Caco-2 (cell line): ENCODE measurements at regions of chr17 and their contacts with region 1.

Region 1: GRCh38 chr17:77300016-77300686 is 159.4 kb downstream of the SEC14L1 start:
- DNase-seq: peak; percentile 81 to 88
- H3K4me3 ChIP-seq: no peak overlapping the region
- H3K4me3 Mint-ChIP-seq: no peak overlapping the region
- H3K27ac Mint-ChIP-seq: peak overlapping the region; percentile 32
- H3K4me1 ChIP-seq: peaks cover 87% of the 10 kb centered on the region
- H3K4me1 Mint-ChIP-seq: peaks cover 44% of the 10 kb centered on the region
- H3K27me3 ChIP-seq: no peaks in the 10 kb centered on the region
- H3K27me3 Mint-ChIP-seq: no peaks in the 10 kb centered on the region
- CTCF ChIP-seq: no peak

Region 2: GRCh38 chr17:77231076-77231871 is 68.9 kb before region 1 on chr17:
- CTCF ChIA-PET with region 1: interaction called, 10 read pairs
- POLR2A ChIA-PET with region 1: no interaction called
- intact Hi-C with region 1: no loop called
- DNase-seq: no peak
- H3K4me3 ChIP-seq: no peak overlapping the region
- H3K4me3 Mint-ChIP-seq: no peak overlapping the region
- H3K27ac Mint-ChIP-seq: no peak overlapping the region
- H3K4me1 ChIP-seq: peaks cover 28% of the 10 kb centered on the region; the same call in 1 of the 2 replicates
- H3K4me1 Mint-ChIP-seq: peaks cover 29% of the 10 kb centered on the region
- H3K27me3 ChIP-seq: no peaks in the 10 kb centered on the region
- H3K27me3 Mint-ChIP-seq: no peaks in the 10 kb centered on the region
- CTCF ChIP-seq: no peak

Region 3: DNA sequence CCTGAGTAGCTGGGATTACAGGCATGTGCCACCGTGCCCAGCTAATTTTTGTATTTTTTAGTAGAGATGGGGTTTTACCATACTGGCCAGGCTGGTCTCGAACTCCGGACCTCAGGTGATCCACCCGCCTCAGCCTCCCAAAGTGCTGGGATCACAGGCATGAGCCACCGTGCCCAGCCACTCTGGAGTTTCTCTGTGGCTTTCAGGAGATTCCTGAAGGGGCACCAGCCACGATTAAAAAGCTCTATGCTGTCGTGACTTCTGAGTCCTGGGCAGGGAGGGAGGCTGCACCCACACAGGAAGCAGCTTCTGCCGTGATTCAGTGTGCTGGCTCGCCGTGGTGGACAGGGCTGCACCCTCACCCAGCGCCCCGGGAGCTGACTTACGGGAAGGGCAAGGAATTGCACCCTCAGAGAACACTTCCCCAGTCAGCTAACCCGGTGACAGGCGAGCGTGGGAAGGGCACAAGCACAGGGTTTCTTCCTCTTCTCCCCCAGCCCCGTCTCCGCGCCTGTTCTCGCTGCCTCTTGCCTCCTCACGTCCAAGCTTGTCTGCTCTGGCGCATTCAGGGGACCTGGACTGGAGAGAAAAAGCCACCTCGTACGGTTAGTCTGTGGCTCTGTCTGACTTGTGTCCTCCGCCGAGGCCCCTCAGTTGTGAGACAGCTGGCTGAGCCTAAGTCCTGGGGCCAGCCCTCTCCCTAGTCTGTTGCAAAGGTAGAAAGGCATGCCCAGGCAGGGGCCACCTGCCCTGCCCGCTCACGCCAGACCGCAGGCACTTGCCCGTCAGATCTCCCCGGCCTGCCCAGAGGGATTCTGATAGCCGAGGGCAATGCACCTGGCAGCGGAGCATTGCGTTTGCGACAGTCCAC is 14.4 kb before region 1 on chr17:
- CTCF ChIA-PET with region 1: interaction called, 3 read pairs
- POLR2A ChIA-PET with region 1: no interaction called
- intact Hi-C with region 1: loop called (anchors 2 kb)
- DNase-seq: no peak
- H3K4me3 ChIP-seq: no peak overlapping the region
- H3K4me3 Mint-ChIP-seq: no peak overlapping the region
- H3K27ac Mint-ChIP-seq: peak overlapping the region; percentile 21
- H3K4me1 ChIP-seq: peaks cover 74% of the 10 kb centered on the region
- H3K4me1 Mint-ChIP-seq: peaks cover 49% of the 10 kb centered on the region
- H3K27me3 ChIP-seq: no peaks in the 10 kb centered on the region
- H3K27me3 Mint-ChIP-seq: no peaks in the 10 kb centered on the region
- CTCF ChIP-seq: no peak

Region 4: GRCh38 chr17:78736526-78737079 is 1436.5 kb after region 1 on chr17:
- CTCF ChIA-PET with region 1: interaction called, 10 read pairs
- POLR2A ChIA-PET with region 1: no interaction called
- intact Hi-C with region 1: no loop called
- DNase-seq: peak; percentile 90 to 93
- H3K4me3 ChIP-seq: peak overlapping the region; percentile 55
- H3K4me3 Mint-ChIP-seq: peak overlapping the region; percentile 89
- H3K27ac Mint-ChIP-seq: peak overlapping the region; percentile 89
- H3K4me1 ChIP-seq: peaks cover 26% of the 10 kb centered on the region
- H3K4me1 Mint-ChIP-seq: peaks cover 43% of the 10 kb centered on the region
- H3K27me3 ChIP-seq: no peaks in the 10 kb centered on the region
- H3K27me3 Mint-ChIP-seq: no peaks in the 10 kb centered on the region
- CTCF ChIP-seq: no peak